ENCODE measurements at regions of chr4 and their contacts with region 1.

Region 1: GRCh38 chr4:153038623-153039311 is 102.6 kb downstream of the FHDC1 start:
- DNase-seq: peak; percentile 35 to 38
- H3K4me3 ChIP-seq: no peak overlapping the region
- H3K4me3 Mint-ChIP-seq: no peak overlapping the region
- H3K27ac Mint-ChIP-seq: no peak overlapping the region
- H3K4me1 ChIP-seq: no peaks in the 10 kb centered on the region
- H3K4me1 Mint-ChIP-seq: peaks cover 15% of the 10 kb centered on the region
- H3K27me3 ChIP-seq: no peaks in the 10 kb centered on the region
- H3K27me3 Mint-ChIP-seq: no peaks in the 10 kb centered on the region
- CTCF ChIP-seq: no peak

Region 2: GRCh38 chr4:153067380-153067779 is 28.6 kb after region 1 on chr4:
- CTCF ChIA-PET with region 1: no interaction called
- POLR2A ChIA-PET with region 1: no interaction called
- intact Hi-C with region 1: loop called (anchors 2 kb)
- DNase-seq: peak; percentile 73 to 74
- H3K4me3 ChIP-seq: no peak overlapping the region
- H3K4me3 Mint-ChIP-seq: no peak overlapping the region
- H3K27ac Mint-ChIP-seq: peak overlapping the region; percentile 88
- H3K4me1 ChIP-seq: peaks cover 38% of the 10 kb centered on the region
- H3K4me1 Mint-ChIP-seq: peaks cover 20% of the 10 kb centered on the region
- H3K27me3 ChIP-seq: no peaks in the 10 kb centered on the region
- H3K27me3 Mint-ChIP-seq: no peaks in the 10 kb centered on the region
- CTCF ChIP-seq: no peak